CD8-positive, alpha-beta memory T cell (primary cell): ENCODE measurements at regions of chr1 and their contacts with region 1.

Region 1: GRCh38 chr1:202170726-202171125 is 10.3 kb upstream of the PTPN7 start:
- DNase-seq: no peak
- H3K4me3 ChIP-seq: no peak overlapping the region
- H3K4me3 Mint-ChIP-seq: no peak overlapping the region
- H3K27ac ChIP-seq: no peak overlapping the region
- H3K27ac Mint-ChIP-seq: peak overlapping the region in 1 of 8 donors; percentile 68
- H3K4me1 ChIP-seq: peaks cover 6% of the 10 kb centered on the region
- H3K4me1 Mint-ChIP-seq: peaks cover 7 to 21% (median 15%) of the 10 kb centered on the region in 3 donors
- H3K27me3 ChIP-seq: no peaks in the 10 kb centered on the region
- H3K27me3 Mint-ChIP-seq: no peaks in the 10 kb centered on the region

Region 2: GRCh38 chr1:201955009-201955728 is 215.6 kb before region 1 on chr1 and contains the start of gene TIMM17A:
- CTCF ChIA-PET with region 1: no interaction called
- POLR2A ChIA-PET with region 1: interaction called, 17 read pairs
- DNase-seq: peak; percentile 87 to 95 (median 91)
- H3K4me3 ChIP-seq: peak within 1 kb of the TSS; percentile 94
- H3K4me3 Mint-ChIP-seq: peak within 1 kb of the TSS; percentile 93 to 99 (median 98)
- H3K27ac ChIP-seq: peak within 1 kb of the TSS; percentile 89
- H3K27ac Mint-ChIP-seq: peak within 1 kb of the TSS; percentile 93 to 100 (median 98)
- H3K4me1 ChIP-seq: peaks cover 13% of the 10 kb centered on the region
- H3K4me1 Mint-ChIP-seq: peaks cover 22 to 32% (median 28%) of the 10 kb centered on the region in 3 donors
- H3K27me3 ChIP-seq: no peaks in the 10 kb centered on the region
- H3K27me3 Mint-ChIP-seq: peaks cover 0 to 2% of the 10 kb centered on the region in 2 donors
- total RNA-seq, gene TIMM17A: 120 to 130 TPM

Region 3: DNA sequence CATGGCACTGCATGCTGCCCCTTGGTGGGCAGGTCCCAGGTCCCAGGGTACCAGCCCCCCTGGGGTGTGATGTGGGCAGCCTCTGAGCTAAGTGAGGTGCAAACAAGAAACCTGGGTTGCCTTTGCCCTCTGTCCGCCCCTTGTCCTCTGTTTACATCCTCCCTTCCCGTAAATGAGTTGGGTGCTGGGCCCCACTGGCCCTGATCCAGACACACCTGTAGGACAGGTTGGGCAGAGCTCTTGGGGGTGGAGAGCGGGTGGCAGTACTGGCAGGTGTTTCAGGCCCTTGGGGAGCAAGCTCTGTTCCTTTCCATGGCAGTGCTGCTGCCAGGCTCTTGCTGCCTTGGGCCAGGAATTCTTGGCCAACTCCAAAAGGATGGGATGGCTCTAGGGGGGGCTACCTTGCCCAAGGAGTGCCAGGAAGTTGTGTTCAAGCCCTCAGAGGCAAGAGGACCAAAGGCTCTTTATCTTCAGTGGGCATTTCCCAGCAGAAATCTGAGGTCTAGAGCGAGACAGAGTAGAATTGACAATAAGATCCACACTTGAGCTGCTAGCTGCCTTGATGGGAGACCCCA is 124.4 kb before region 1 on chr1:
- CTCF ChIA-PET with region 1: no interaction called
- POLR2A ChIA-PET with region 1: no interaction called
- DNase-seq: no peak
- H3K4me3 ChIP-seq: no peak overlapping the region
- H3K4me3 Mint-ChIP-seq: no peak overlapping the region
- H3K27ac ChIP-seq: no peak overlapping the region
- H3K27ac Mint-ChIP-seq: peak overlapping the region in 2 of 8 donors; percentile 48 to 79
- H3K4me1 ChIP-seq: no peaks in the 10 kb centered on the region
- H3K4me1 Mint-ChIP-seq: peaks cover 0 to 9% (median 3%) of the 10 kb centered on the region in 3 donors
- H3K27me3 ChIP-seq: no peaks in the 10 kb centered on the region
- H3K27me3 Mint-ChIP-seq: peaks cover 12 to 29% of the 10 kb centered on the region in 2 donors

Region 4: DNA sequence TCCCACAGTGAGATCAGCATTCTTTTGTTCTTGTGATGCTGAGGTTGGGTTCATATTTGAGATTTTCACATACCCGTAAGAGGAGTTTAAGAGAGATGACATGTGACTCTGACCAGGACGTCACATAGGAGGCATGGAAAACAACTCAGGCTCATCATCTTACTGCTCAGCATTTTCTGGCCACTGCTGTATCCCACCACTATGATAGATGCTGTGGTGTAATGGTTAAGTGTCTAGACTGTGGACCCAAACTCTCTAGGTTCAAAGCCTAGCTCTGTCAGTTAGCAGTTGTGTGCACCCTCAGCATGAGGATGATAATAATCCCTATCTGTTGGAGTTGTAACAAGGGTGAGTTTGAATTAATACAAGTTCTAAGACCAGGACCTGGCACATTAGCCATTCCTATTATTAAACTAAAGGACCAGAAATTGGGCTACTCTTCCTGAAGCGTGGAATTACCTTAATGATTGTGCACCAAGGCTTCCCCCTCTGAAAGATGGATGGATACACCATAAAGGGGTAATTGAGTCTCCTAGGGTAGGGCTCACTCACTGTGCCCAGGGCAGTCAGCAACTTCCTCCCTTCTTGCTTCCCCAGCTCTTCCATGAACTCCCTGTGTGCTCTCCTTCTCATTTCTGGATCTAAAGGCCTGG is 63.8 kb after region 1 on chr1:
- CTCF ChIA-PET with region 1: no interaction called
- POLR2A ChIA-PET with region 1: no interaction called
- DNase-seq: no peak
- H3K4me3 ChIP-seq: no peak overlapping the region
- H3K4me3 Mint-ChIP-seq: no peak overlapping the region
- H3K27ac ChIP-seq: no peak overlapping the region
- H3K27ac Mint-ChIP-seq: no peak overlapping the region
- H3K4me1 ChIP-seq: no peaks in the 10 kb centered on the region
- H3K4me1 Mint-ChIP-seq: peaks cover 0 to 3% (median 2%) of the 10 kb centered on the region in 3 donors
- H3K27me3 ChIP-seq: no peaks in the 10 kb centered on the region
- H3K27me3 Mint-ChIP-seq: peaks cover 4 to 12% of the 10 kb centered on the region in 2 donors